ENCODE measurements at regions of chr10 and their contacts with region 1.

Region 1: DNA sequence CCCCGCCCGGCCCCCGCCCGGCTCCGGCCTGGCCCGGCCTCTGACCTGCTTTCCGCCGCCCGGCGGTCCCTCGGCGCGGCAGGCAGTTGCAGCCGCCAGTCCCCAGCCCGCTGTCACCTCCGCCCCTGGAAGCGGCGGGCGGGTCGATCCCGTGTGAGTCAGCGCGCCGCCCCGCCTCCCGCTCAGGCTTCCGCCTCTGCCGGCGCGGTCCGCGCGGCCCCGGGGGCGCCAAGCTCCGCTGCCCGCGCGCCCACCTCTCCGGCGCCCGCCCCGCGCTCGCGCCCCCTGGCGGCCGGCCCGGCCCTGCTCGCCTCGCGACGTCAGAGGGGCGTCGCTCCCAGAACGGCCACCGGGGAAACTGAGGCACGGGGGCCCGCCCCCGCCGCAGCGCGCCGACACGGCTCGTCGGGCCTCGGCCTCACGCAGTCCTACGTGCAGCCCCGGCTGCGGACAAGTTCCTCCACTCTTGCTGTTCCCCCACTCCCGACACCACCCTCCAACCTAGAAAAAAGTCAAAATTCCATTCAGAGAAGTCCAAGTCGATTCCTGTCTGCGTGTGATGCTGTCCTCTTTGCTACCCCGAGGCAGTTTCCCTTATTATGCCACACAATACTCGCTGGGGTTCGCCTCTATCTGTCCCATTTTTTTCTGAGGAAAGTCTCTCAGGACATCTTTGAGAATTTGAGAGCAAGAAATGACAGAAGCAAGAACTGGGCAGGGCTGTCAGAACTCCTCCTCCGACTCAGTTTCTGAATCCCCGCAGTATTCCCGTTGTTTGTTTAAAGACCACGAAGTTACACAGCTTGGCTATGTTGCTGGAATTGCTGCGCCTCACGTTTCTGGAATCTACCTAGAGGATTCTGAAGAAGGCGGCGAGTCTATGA is at the start of gene DNMBP:
- DNase-seq: peak; percentile 82 to 91
- ATAC-seq: peak; percentile 72 to 89
- H3K4me3 ChIP-seq: peak within 1 kb of the TSS; percentile 81
- H3K27ac ChIP-seq: peak within 1 kb of the TSS; percentile 83 to 92
- H3K4me1 ChIP-seq: peaks cover 31% of the 10 kb centered on the region
- CTCF ChIP-seq: peak; percentile 90
- EP300 ChIP-seq: no peak
- POLR2A ChIP-seq: peak; percentile 37
- RAD21 ChIP-seq: peak; percentile 34 to 60; a peak in 4 of 5 replicates
- polyA plus RNA-seq, gene DNMBP: 20.3 and 24.3 TPM in 2 replicates

Region 2: DNA sequence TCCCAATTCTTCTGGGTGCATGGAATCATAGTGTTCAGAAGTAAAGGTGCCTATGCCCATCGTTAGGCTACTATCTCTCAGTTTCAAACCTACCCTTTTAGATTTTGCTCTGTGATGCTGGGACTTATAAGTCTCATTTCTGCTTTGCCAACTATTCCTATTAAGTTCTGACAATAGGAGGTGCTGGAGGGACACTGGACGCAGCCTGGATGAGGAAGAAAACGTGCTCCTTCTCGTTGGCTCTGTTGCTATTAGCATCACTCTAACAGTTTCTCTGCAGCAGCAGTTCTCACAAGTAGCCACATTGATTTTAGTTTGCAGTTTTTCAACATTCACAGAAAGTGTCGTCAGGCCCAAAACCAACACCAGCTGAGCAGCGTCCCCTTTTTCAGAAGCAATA is 155.2 kb before region 1 on chr10:
- CTCF ChIA-PET with region 1: interaction called, 16 read pairs
- POLR2A ChIA-PET with region 1: no interaction called
- DNase-seq: peak; percentile 41 to 81
- ATAC-seq: peak; percentile 38 to 43; a peak in 4 of 6 replicates
- H3K4me3 ChIP-seq: no peak overlapping the region
- H3K27ac ChIP-seq: no peak overlapping the region
- H3K4me1 ChIP-seq: peaks cover 20% of the 10 kb centered on the region
- CTCF ChIP-seq: peak; percentile 46
- EP300 ChIP-seq: no peak
- POLR2A ChIP-seq: no peak
- RAD21 ChIP-seq: peak; percentile 57 to 73

Region 3: DNA sequence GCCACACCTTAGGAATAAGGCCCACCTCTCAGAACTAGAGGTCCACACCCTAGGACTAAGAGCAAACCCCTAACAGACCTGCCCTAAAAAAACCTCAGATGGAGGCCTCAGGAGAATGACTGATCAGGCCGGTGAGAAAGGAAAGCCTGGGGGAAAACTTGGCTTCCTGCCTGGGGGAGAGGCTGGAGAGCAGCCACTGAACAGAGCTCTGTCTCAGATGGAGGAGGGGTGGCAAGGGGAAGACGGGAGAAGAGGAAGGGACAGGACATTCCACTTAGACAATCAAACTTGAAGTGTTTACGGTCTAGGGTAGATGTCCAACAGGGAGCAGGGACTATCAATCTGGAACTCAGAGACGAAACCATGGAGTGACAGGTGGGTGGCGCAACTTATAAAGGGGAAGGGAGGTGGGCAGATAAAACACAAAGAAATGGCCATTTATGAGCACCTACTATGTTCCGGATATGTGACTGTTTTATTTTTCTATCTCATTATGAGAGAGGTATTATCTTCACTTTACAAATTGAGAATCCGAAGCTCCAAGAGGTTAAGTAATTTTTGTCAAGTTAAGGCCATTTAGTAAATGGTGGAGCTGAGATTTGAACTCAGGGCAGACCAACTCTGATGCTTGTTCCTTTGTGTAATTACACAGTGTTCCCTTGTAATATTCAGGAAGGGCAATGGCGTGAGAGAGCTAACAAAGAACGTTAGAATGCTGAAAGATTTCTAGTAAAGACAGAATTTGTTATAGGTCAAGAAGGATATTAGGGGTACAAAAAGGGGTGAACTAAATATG is 82.9 kb before region 1 on chr10:
- CTCF ChIA-PET with region 1: interaction called, 27 read pairs
- POLR2A ChIA-PET with region 1: interaction called, 6 read pairs
- DNase-seq: peak in 1 of 2 experiments; percentile 34
- ATAC-seq: peak in 1 of 2 experiments; percentile 23; a peak in 3 of 6 replicates
- H3K4me3 ChIP-seq: peak overlapping the region; percentile 42
- H3K27ac ChIP-seq: peak overlapping the region; percentile 84
- H3K4me1 ChIP-seq: peaks cover 70% of the 10 kb centered on the region
- CTCF ChIP-seq: no peak
- EP300 ChIP-seq: no peak
- POLR2A ChIP-seq: no peak
- RAD21 ChIP-seq: no peak

Region 4: DNA sequence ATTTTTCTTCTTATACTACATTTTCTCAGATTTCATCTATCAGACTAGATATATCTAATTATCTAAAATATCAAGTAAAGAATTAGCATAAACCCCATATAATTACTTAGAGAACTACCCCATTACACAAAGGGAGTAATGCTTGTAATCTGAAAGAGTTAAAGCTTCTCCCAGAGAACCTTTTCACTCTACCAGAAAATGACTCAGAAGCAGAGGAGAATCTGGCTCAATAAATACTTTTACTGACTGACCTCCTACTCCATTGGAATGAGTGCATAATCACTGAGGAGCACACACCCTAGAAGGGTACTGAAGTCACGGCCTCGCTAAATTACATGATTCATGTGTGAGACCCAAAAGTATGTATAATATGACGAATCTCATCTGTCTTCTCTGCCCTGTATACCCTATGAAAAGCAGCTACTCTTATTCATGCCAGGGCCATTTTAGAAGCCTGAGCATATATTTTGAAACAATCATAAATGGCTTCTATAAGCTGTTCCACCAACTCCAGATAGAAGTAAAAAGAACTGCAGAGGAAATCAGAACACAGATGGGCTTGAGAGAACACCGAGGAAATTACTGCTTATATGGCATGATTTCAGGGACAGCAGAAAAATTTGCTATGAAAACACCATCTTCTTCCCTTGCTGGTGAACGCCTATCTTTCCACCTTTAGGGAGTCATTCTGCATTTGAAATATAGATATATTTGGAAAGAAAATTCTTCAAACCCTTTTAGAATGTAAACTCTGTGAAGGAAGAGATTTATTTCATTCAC is 33.0 kb before region 1 on chr10:
- CTCF ChIA-PET with region 1: interaction called, 58 read pairs
- POLR2A ChIA-PET with region 1: interaction called, 9 read pairs
- DNase-seq: peak; percentile 55 to 82
- ATAC-seq: peak; percentile 91 to 95
- H3K4me3 ChIP-seq: peak overlapping the region; percentile 2; the same call in 1 of the 3 replicates
- H3K27ac ChIP-seq: peak overlapping the region; percentile 60 to 74
- H3K4me1 ChIP-seq: peaks cover 64% of the 10 kb centered on the region
- CTCF ChIP-seq: no peak
- EP300 ChIP-seq: no peak; a peak in 1 of 5 replicates
- POLR2A ChIP-seq: no peak
- RAD21 ChIP-seq: peak in 1 of 2 experiments; percentile 19; a peak in 1 of 5 replicates

Region 5: DNA sequence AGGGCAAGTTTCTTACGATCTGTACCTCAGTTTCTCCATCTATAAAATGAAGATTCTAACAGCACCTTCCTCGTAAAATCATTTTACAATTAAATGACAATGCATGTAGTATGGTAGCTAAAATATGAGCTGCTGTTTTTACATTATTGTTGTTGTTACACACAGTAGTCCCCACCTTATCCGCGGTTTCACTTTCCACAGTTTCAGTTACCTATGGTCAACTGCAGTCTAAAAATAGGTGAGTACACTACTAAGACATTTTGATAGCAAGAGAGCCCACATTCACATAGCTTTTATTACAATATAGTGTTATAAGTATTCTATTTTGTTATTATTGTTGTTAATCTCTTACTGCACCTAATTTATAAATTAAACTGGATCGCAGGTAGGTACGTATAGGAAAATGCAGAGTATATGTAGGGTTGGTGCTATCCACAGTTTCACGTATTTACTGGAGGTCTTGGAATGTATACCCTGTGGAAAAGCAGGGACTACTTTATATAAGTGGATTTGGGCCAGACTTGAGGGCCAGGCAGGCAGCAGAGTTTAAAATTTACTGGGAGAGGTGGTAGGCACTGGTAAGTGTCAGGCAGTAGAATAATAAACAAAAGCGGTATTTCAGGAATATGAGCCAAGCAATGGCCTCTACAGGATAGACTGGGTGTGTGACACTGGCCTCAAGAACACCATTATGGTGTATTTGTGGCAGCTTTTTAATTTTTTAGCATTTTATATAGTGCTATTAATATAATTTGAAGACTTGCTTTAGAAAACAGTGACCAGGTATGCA is 10.5 kb before region 1 on chr10:
- CTCF ChIA-PET with region 1: interaction called, 14 read pairs
- POLR2A ChIA-PET with region 1: interaction called, 6 read pairs
- DNase-seq: no peak
- ATAC-seq: no peak
- H3K4me3 ChIP-seq: no peak overlapping the region
- H3K27ac ChIP-seq: no peak overlapping the region
- H3K4me1 ChIP-seq: peaks cover 34% of the 10 kb centered on the region
- CTCF ChIP-seq: no peak
- EP300 ChIP-seq: no peak
- POLR2A ChIP-seq: no peak
- RAD21 ChIP-seq: no peak

Region 6: DNA sequence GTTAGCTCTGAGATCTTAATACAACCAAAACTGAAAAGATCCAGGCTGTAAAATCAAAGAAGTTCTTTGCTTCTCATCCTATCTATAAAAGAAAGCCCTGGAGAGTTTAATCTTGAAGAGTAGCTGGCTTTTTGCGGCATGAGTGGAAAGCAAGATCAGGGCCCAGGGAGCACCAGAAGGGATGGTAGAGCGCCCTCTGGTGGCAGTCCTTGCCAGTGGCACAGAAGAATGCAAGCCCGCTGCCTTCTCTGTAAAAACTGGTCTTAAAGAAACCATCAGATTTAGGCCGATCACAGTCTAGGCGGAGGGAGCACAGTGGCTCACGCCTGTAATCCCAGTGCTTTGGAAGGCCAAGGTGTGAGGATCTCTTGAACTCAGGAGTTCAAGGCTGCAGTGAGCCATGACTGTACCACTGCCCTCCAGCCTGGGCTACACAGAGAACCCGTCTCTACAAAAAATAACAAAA is 36.0 kb after region 1 on chr10:
- CTCF ChIA-PET with region 1: interaction called, 101 read pairs
- POLR2A ChIA-PET with region 1: no interaction called
- DNase-seq: peak; percentile 67 to 86
- ATAC-seq: peak; percentile 94
- H3K4me3 ChIP-seq: no peak overlapping the region
- H3K27ac ChIP-seq: peak overlapping the region; percentile 25 to 78; a peak in 5 of 6 replicates
- H3K4me1 ChIP-seq: peaks cover 26% of the 10 kb centered on the region
- CTCF ChIP-seq: peak; percentile 97
- EP300 ChIP-seq: 0 out of 5 replicates have a peak, but pooled peaks of 1 of the 2 experiments have one; percentile 4
- POLR2A ChIP-seq: no peak
- RAD21 ChIP-seq: peak; percentile 94 to 96

Measured in A549 (cell line).